Calu3 (cell line): ENCODE measurements at regions of chr1 and their contacts with region 1.

Region 1: GRCh38 chr1:235328357-235329138 is at the start of gene GGPS1:
- DNase-seq: peak; percentile 95
- H3K4me3 Mint-ChIP-seq: no peak within 1 kb of the TSS
- H3K27ac Mint-ChIP-seq: no peak within 1 kb of the TSS
- H3K4me1 Mint-ChIP-seq: peaks cover 14% of the 10 kb centered on the region
- H3K27me3 Mint-ChIP-seq: no peaks in the 10 kb centered on the region
- CTCF ChIP-seq: no peak
- total RNA-seq, gene GGPS1: 40.5 and 45.6 TPM in 2 replicates

Region 2: GRCh38 chr1:235253219-235253962 is 75.2 kb before region 1 on chr1:
- CTCF ChIA-PET with region 1: interaction called, 6 read pairs
- intact Hi-C with region 1: loop called (anchors 1 kb)
- DNase-seq: peak; percentile 80
- H3K4me3 Mint-ChIP-seq: no peak overlapping the region
- H3K27ac Mint-ChIP-seq: peak overlapping the region; percentile 21
- H3K4me1 Mint-ChIP-seq: peaks cover 6% of the 10 kb centered on the region
- H3K27me3 Mint-ChIP-seq: no peaks in the 10 kb centered on the region
- CTCF ChIP-seq: peak; percentile 82

Region 3: GRCh38 chr1:235367000-235367908 is 38.7 kb after region 1 on chr1 and contains the start of gene TBCE:
- CTCF ChIA-PET with region 1: interaction called, 4 read pairs
- intact Hi-C with region 1: loop called (anchors 2 kb)
- DNase-seq: peak; percentile 99
- H3K4me3 Mint-ChIP-seq: peak within 1 kb of the TSS; percentile 87
- H3K27ac Mint-ChIP-seq: peak within 1 kb of the TSS; percentile 93
- H3K4me1 Mint-ChIP-seq: peaks cover 31% of the 10 kb centered on the region
- H3K27me3 Mint-ChIP-seq: no peaks in the 10 kb centered on the region
- CTCF ChIP-seq: no peak
- total RNA-seq, gene TBCE: 19.0 and 31.3 TPM in 2 replicates

Region 4: DNA sequence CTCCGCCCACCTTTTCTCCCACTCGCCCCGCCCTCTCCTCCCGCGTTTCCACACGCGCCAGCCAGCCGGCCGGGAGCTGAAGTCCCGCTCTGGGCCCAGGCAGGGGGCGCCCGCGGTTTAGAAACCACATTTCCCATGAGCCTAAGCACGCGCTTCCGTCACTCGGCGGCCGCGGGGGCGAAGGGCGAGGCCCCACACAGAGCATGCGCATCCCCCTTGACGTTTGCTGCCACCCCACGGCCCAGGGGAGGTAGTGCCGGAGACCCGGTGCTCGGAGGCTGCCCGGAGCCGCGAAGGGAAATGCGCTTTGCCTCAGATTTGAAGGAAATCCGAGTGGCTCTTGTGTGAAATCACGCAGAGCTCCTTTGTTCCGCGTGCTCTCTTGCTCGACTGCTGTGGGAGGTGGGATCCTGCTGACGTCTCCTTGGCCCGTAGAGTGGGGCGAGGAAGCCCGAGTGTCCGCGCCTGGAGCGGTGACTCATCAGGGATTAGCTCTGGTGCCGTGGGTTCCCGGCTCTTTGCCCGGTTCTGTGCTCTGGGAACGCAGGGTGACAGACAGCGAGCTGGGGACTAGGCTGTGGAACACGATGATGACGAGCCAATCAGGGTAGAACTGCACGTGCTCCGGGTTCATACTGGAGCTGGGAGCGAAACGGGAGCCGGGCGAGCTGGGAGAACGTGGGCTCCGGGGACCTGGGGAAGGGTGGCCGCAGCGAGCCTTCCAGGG is 176.1 kb after region 1 on chr1:
- CTCF ChIA-PET with region 1: interaction called, 7 read pairs
- intact Hi-C with region 1: loop called (anchors 5 kb)
- DNase-seq: peak; percentile 100
- H3K4me3 Mint-ChIP-seq: peak overlapping the region; percentile 88
- H3K27ac Mint-ChIP-seq: peak overlapping the region; percentile 92
- H3K4me1 Mint-ChIP-seq: peaks cover 40% of the 10 kb centered on the region
- H3K27me3 Mint-ChIP-seq: no peaks in the 10 kb centered on the region
- CTCF ChIP-seq: peak; percentile 89